ENCODE measurements at regions of chr6 and their contacts with region 1.

Region 1: GRCh38 chr6:6230288-6230687 is 90.2 kb downstream of the F13A1 start:
- DNase-seq: no peak
- ATAC-seq: no peak
- H3K4me3 ChIP-seq: no peak overlapping the region
- H3K27ac ChIP-seq: no peak overlapping the region
- H3K4me1 ChIP-seq: no peaks in the 10 kb centered on the region
- H3K27me3 ChIP-seq: no peaks in the 10 kb centered on the region; the same call in 1 of the 2 replicates
- CTCF ChIP-seq: no peak

Region 2: GRCh38 chr6:6305575-6305974 is 75.3 kb after region 1 on chr6:
- CTCF ChIA-PET with region 1: interaction called, 15 read pairs
- POLR2A ChIA-PET with region 1: no interaction called
- in situ Hi-C with region 1: no loop called
- intact Hi-C with region 1: no loop called
- DNase-seq: no peak
- ATAC-seq: no peak
- H3K4me3 ChIP-seq: no peak overlapping the region
- H3K27ac ChIP-seq: no peak overlapping the region
- H3K4me1 ChIP-seq: no peaks in the 10 kb centered on the region
- H3K27me3 ChIP-seq: peaks cover 2% of the 10 kb centered on the region
- CTCF ChIP-seq: no peak

Region 3: DNA sequence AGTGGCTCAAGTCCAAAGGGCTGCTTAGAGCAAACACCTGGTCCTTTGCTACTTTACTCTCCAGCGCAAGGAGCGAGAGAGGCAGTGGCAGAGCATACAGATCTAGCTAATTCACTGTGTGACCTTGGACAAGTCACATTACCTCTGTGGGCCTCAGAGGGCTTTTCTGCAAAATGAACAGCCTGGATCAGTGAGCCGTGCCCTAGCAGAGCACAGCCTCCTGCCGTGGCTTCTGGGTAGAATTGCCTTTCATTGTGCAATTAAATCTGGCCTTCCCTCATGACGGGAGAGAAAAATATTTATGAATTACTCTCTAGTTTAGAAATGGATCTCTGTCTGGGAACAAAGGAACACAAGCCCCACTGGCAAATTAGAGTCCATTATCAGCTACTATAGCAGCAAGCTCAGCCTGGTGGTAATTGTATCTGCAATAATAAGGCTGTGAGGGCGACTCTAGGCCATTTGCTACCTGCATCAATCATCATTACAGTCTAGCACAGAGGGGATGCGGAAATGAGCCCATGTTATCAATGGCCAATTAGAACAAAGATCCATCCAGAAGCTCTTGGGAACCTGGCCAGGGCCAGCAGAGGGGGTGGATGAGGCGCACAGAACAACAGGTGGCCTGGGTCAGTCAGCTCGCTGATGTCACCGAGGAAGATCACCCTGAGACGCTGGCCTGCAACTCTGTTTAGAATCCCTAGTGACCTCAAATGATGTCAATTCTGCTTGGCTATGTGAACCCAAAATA is 244.1 kb after region 1 on chr6:
- CTCF ChIA-PET with region 1: no interaction called
- POLR2A ChIA-PET with region 1: interaction called, 14 read pairs
- in situ Hi-C with region 1: no loop called
- intact Hi-C with region 1: no loop called
- DNase-seq: no peak
- ATAC-seq: no peak
- H3K4me3 ChIP-seq: no peak overlapping the region
- H3K27ac ChIP-seq: no peak overlapping the region
- H3K4me1 ChIP-seq: no peaks in the 10 kb centered on the region
- H3K27me3 ChIP-seq: peaks cover 6% of the 10 kb centered on the region; the same call in 1 of the 2 replicates
- CTCF ChIP-seq: no peak

Measured in Panc1 (cell line).